Dendritic cell treated with granulocyte-macrophage colony-stimulating factor and Interleukin-4, amounts not matched to agents 40 ng/mL and 50 ng/mL, for 4 days (primary cell): ENCODE measurements at regions of chr2 and their contacts with region 1.

Region 1: DNA sequence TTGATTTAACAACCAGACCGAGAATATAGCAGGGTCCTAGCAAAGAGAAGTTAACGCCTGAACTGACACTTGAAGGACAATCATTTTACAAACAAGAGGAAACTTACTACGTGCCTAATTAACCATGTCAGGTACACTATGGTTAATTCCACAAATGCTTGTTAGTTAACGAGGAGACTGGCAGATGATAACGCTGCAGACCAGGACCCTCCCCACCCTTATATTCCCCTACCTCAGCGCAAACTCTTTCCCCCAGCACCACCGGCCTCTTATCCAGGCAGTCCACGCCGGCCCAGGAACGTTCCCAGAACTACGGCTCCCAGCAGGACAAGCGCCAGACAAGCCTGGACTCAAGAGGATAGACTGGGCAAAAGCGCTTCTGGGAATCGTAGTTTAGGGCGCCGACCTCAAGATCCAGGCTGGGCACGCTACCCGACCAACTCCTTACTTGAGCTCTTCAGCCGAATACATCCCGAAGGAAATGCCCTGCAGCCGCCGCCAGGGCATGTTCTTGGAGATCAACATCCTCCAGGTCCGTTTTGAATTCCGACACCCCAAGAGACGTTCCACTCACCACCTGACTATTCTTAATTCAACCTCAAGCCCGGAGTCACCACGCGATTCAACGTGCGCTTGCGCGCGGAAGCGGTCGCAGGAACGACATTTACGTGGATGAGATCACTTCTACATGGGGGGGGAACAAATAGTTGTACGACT is at the start of gene POLR1A:
- H3K4me3 Mint-ChIP-seq: peak within 1 kb of the TSS; percentile 98
- H3K27ac Mint-ChIP-seq: peak within 1 kb of the TSS; percentile 98
- H3K4me1 Mint-ChIP-seq: peaks cover 48% of the 10 kb centered on the region
- H3K27me3 Mint-ChIP-seq: no peaks in the 10 kb centered on the region

Region 2: GRCh38 chr2:85611705-85612587 is 493.5 kb before region 1 on chr2 and contains the start of gene C2orf68:
- intact Hi-C with region 1: loop called (anchors 10 kb)
- H3K4me3 Mint-ChIP-seq: peak within 1 kb of the TSS; percentile 96
- H3K27ac Mint-ChIP-seq: peak within 1 kb of the TSS; percentile 87
- H3K4me1 Mint-ChIP-seq: peaks cover 37% of the 10 kb centered on the region
- H3K27me3 Mint-ChIP-seq: no peaks in the 10 kb centered on the region

Region 3: DNA sequence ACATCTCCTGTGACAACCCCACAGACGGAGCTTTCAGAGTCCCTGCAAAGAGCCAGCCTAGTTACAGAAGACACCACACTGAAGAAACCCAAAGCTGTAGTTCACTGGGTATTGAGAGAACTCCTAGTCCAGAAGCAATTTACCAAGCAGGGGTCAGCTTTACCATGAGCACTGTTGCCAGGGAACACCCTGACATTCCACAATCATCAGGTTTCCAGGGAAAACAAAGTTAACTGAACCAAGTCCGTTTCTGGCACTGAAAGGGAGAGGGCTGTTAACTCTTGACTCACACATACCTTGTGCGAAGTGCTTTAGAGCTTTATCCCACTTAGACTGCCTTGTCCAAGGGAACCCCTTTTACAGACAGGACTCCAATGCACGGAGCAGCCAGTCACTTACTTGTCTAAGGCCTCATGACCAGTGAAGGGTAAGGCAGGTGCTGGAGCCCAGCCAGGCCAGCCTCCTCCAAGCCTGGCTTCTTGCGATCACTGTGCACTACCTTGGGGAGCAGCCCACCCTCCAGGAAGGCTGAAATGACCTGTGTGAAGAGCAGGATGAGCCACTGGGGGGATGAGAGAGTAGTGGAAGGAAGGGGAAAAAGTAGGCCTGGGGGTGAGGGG is 178.1 kb after region 1 on chr2:
- intact Hi-C with region 1: no loop called
- H3K4me3 Mint-ChIP-seq: no peak overlapping the region
- H3K27ac Mint-ChIP-seq: no peak overlapping the region
- H3K4me1 Mint-ChIP-seq: no peaks in the 10 kb centered on the region
- H3K27me3 Mint-ChIP-seq: peaks cover 44% of the 10 kb centered on the region

Region 4: DNA sequence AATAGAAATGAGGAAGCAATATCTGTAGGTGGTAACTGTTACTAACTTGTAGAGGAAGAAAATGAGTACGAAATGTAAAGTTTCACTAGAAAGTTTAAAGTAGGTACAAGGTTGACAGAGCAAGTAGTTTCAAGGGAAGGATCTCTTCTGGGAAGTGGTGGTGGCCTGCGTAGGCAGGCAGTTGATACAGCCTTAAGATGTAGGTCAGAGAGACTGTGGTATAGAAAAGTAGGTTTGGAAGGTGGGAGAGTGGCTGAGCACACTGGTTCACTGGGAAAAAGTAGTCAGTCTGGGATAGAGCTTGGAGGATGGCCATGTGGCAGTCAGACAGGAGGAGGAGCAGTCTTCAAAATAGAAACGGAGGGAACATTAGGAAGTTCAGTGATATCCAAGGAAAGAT is 359.2 kb after region 1 on chr2:
- intact Hi-C with region 1: no loop called
- H3K4me3 Mint-ChIP-seq: no peak overlapping the region
- H3K27ac Mint-ChIP-seq: no peak overlapping the region
- H3K4me1 Mint-ChIP-seq: peaks cover 28% of the 10 kb centered on the region
- H3K27me3 Mint-ChIP-seq: no peaks in the 10 kb centered on the region